ENCODE measurements at regions of chr17 and their contacts with region 1.

Region 1: DNA sequence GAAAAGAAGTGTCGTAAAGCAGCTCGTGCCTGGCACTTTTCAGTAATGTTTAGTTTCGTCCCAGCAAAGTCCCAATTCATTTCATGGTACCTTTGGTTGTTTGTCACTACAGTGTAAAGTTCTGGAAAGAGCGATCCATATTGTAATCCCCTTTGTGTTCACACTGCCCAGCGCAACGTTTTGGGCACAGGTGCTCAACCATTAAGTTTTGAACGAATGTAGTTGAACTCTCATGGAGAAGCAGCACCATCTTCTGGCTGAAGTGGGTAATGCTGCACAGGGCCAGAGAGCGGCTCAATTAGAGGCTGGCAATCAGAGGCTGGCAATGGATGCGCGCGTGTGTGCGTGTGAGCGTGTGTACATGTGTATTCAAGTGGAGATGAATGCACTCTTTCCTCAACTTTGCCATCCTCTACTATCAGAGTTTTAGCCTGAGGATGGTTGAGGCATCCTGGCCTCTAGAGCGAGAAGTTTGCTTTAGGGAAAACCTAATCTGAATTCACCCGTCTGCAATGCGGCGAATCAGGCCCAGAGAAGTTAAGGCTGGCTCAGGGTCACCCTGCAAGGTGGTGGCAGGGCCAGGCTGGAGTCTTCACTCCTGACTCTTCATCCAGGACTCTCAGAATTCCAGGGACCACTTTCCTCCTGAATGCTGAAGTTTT is 29.9 kb downstream of the DYNLL2 start:
- DNase-seq: peak; percentile 92
- ATAC-seq: peak; percentile 99
- H3K4me3 Mint-ChIP-seq: no peak overlapping the region
- H3K27ac Mint-ChIP-seq: no peak overlapping the region
- H3K4me1 Mint-ChIP-seq: no peaks in the 10 kb centered on the region
- H3K27me3 Mint-ChIP-seq: peaks cover 3% of the 10 kb centered on the region
- CTCF ChIP-seq: peak; percentile 89

Region 2: DNA sequence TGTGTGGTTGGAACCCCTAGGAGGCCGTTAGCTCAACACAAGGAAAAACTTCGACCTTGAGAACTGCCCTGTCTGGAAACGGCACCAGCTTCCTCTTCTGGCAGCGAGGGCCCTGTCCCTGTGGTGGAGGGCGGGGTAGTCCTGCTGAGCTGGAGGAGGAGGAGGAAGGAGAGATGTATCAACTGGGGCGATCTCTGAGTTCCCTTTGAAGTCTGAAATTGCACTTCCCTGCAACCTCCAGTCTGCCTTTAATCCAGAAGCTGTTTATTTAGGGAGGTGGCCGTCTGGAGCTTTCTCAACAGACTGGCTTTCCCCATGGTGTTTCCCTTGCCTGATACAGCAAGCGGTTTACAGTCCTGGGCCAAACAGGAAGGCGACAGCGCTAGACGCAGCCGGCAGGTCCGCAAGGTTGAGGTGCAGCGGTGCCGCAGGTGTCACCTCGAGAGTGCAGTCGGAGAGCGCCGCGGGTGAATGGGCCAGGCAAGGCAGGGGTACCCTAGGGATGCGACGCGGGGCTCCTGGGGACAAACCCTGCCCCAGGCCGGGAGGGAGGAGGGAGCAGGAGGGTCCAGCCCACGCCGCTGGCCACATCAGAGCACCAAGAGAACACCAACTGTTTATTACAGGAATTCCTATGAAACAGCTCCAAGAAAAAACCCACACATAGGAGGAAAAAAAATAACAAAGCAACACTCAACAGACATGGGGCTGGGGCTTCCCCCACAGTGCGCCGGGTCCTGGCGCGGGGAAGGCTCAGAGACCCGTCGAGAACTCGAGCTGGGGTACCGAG is 251.9 kb before region 1 on chr17:
- CTCF ChIA-PET with region 1: interaction called, 69 read pairs
- POLR2A ChIA-PET with region 1: interaction called, 4 read pairs
- intact Hi-C with region 1: loop called (anchors 5 kb)
- DNase-seq: peak; percentile 41
- ATAC-seq: peak; percentile 75
- H3K4me3 Mint-ChIP-seq: peak overlapping the region; percentile 62
- H3K27ac Mint-ChIP-seq: no peak overlapping the region
- H3K4me1 Mint-ChIP-seq: peaks cover 13% of the 10 kb centered on the region
- H3K27me3 Mint-ChIP-seq: peaks cover 35% of the 10 kb centered on the region
- CTCF ChIP-seq: no peak

Region 3: DNA sequence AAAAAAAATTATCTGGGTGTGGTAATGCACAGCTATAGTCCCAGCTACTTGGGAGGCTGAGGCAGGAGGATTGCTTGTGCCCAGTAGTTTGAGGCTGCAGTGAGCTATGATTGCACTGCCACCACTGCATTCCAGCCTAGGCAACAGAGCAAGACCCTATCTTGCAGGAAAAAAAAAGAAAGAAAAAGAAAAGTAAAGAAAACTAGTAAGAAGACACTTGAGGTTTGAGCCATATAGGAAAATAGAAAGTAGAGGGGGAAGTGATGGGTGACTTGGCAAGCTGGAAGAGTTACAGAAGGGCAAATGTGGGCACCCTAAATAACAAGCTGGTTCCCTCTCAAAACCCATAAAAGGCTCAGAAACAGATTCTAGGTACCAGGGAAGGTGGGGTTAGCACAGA is 88.2 kb before region 1 on chr17:
- CTCF ChIA-PET with region 1: interaction called, 10 read pairs
- POLR2A ChIA-PET with region 1: no interaction called
- intact Hi-C with region 1: no loop called
- DNase-seq: no peak
- ATAC-seq: no peak
- H3K4me3 Mint-ChIP-seq: no peak overlapping the region
- H3K27ac Mint-ChIP-seq: no peak overlapping the region
- H3K4me1 Mint-ChIP-seq: no peaks in the 10 kb centered on the region
- H3K27me3 Mint-ChIP-seq: peaks cover 26% of the 10 kb centered on the region
- CTCF ChIP-seq: no peak

Region 4: DNA sequence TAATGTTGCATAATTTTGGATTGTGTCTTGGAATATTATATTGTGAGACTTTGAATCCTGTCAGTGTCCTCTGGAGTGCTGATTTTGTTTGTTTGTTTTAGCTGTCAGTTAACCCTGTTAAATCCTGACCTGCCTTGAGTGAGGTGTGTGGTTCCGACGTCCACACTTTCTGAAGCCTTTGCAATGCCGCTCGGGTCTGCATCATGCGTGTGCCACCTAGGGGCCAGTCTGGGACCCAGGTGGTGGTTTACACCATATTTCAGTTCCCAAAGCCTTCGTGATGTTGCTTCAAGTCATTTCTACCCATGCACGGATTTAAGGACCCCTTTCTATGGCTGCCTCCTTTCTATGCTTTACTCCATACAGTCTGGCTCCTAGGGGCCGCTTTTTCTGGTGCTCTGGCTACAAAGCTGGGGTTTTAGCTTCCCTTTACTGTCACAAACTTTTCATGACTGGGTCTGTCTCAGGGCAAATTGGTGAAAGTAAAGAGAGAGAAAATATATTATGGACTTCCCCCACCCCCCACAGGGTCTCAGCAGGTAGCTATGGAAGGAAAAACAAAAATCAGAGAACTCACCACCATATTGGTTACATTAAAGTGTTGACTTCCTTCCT is 23.7 kb after region 1 on chr17:
- CTCF ChIA-PET with region 1: interaction called, 10 read pairs
- POLR2A ChIA-PET with region 1: no interaction called
- intact Hi-C with region 1: no loop called
- DNase-seq: no peak
- ATAC-seq: no peak
- H3K4me3 Mint-ChIP-seq: no peak overlapping the region
- H3K27ac Mint-ChIP-seq: no peak overlapping the region
- H3K4me1 Mint-ChIP-seq: no peaks in the 10 kb centered on the region
- H3K27me3 Mint-ChIP-seq: no peaks in the 10 kb centered on the region
- CTCF ChIP-seq: no peak

Measured in activated CD8-positive, alpha-beta T cell treated with anti-CD3 and anti-CD28 coated beads for 36 hours (primary cell).